ENCODE measurements at regions of chr3 and their contacts with region 1.

Region 1: GRCh38 chr3:59052803-59053411 is 3.1 kb upstream of the CFAP20DC start:
- DNase-seq: no peak
- H3K4me3 ChIP-seq: no peak overlapping the region
- CTCF ChIP-seq: peak; percentile 64

Region 2: GRCh38 chr3:58640700-58641372 is 412.1 kb before region 1 on chr3:
- CTCF ChIA-PET with region 1: interaction called, 36 read pairs
- POLR2A ChIA-PET with region 1: no interaction called
- DNase-seq: no peak
- H3K4me3 ChIP-seq: no peak overlapping the region
- CTCF ChIP-seq: peak; percentile 96

Region 3: GRCh38 chr3:58824285-58824684 is 228.6 kb before region 1 on chr3:
- CTCF ChIA-PET with region 1: interaction called, 72 read pairs
- POLR2A ChIA-PET with region 1: no interaction called
- DNase-seq: no peak
- H3K4me3 ChIP-seq: no peak overlapping the region
- CTCF ChIP-seq: peak; percentile 68

Region 4: GRCh38 chr3:58829321-58830000 is 223.4 kb before region 1 on chr3:
- CTCF ChIA-PET with region 1: interaction called, 72 read pairs
- POLR2A ChIA-PET with region 1: no interaction called
- DNase-seq: no peak
- H3K4me3 ChIP-seq: no peak overlapping the region
- CTCF ChIP-seq: no peak

Region 5: DNA sequence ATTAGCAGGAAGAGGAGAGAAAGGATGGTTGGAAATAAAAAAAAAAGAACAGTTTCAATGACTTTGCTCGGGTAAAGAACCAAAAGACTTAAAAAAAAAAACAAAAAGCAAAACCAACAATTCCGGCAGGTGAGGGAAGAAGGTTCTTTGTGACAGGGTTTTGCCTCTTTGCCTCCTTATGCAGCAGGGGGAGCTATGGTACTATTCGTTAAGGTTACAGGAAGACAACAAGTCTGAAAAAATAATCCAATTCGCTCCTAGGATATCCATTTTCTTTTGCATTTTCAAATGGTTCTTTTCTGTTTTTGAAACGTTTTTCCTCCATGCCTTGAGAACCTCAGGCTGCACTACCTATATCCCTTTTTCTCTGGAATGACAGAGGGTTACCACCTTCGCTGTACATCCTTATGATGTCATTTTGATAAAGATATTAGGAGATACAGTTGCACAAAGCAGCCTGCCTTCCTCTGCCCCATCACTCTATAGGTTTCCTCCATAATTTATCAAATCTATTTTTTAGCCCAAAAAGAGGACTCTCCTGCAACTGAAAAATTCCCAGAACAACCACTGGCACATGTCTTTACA is 58.1 kb before region 1 on chr3:
- CTCF ChIA-PET with region 1: interaction called, 18 read pairs
- POLR2A ChIA-PET with region 1: no interaction called
- DNase-seq: no peak
- H3K4me3 ChIP-seq: no peak overlapping the region
- CTCF ChIP-seq: peak; percentile 75

Region 6: GRCh38 chr3:59163953-59164352 is 111.0 kb after region 1 on chr3:
- CTCF ChIA-PET with region 1: no interaction called
- POLR2A ChIA-PET with region 1: no interaction called
- DNase-seq: no peak
- H3K4me3 ChIP-seq: no peak overlapping the region
- CTCF ChIP-seq: no peak